H1 (cell line): ENCODE measurements at regions of chr16 and their contacts with region 1.

Region 1: DNA sequence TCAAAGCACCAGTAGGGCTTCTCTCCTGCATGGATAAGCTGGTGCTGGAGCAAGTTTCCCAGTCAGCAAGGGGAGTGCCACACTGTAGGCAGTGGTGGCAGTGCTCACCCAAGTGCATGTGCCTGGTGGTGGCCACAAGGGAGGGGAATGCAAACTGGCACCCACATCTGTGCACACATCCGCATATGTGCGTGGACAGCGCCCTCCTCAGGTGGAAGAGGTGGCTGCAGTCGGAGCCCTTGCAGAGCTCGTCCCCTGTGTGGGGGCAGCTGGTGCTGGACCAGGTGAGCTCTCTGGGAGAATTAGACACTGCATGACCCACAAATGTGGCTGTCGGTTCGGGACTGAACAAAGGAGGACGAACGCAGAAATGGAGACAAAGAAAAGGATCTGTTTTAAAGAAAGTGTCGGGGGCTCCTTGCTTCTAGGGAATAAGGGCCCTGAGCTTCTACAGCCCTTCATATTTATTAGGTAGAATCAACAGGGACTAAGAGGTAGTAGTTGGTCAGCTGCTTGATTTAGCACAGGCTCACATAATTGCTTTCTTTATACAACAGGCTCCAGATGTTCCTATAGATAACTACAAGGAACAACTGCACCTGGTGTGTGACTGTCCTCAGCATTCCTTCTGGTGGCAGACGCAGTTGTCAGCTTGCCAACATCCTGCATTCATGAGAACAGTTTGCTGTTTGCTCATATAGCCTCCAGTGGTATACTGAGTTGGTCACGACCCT is 5.3 kb upstream of the ZNF689 start:
- DNase-seq: peak; percentile 82 to 100
- H3K4me3 ChIP-seq: no peak overlapping the region
- H3K27ac ChIP-seq: no peak overlapping the region
- H3K4me1 ChIP-seq: peaks cover 0 to 3% (median under 1%) of the 10 kb centered on the region in 4 experiments; a peak in 1 of 7 replicates
- H3K27me3 ChIP-seq: no peaks in the 10 kb centered on the region; a peak in 2 of 7 replicates
- CTCF ChIP-seq: peak; percentile 99 to 100 (median 100)
- EP300 ChIP-seq: no peak
- POLR2A ChIP-seq: no peak
- RAD21 ChIP-seq: peak; percentile 99

Region 2: GRCh38 chr16:30482366-30482765 is 133.2 kb before region 1 on chr16:
- CTCF ChIA-PET with region 1: interaction called, 16 read pairs
- POLR2A ChIA-PET with region 1: no interaction called
- DNase-seq: no peak
- H3K4me3 ChIP-seq: no peak overlapping the region
- H3K27ac ChIP-seq: no peak overlapping the region
- H3K4me1 ChIP-seq: no peaks in the 10 kb centered on the region
- H3K27me3 ChIP-seq: no peaks in the 10 kb centered on the region
- CTCF ChIP-seq: peak in 1 of 3 experiments; percentile 42; a peak in 1 of 4 replicates
- EP300 ChIP-seq: no peak
- POLR2A ChIP-seq: no peak
- RAD21 ChIP-seq: no peak

Region 3: DNA sequence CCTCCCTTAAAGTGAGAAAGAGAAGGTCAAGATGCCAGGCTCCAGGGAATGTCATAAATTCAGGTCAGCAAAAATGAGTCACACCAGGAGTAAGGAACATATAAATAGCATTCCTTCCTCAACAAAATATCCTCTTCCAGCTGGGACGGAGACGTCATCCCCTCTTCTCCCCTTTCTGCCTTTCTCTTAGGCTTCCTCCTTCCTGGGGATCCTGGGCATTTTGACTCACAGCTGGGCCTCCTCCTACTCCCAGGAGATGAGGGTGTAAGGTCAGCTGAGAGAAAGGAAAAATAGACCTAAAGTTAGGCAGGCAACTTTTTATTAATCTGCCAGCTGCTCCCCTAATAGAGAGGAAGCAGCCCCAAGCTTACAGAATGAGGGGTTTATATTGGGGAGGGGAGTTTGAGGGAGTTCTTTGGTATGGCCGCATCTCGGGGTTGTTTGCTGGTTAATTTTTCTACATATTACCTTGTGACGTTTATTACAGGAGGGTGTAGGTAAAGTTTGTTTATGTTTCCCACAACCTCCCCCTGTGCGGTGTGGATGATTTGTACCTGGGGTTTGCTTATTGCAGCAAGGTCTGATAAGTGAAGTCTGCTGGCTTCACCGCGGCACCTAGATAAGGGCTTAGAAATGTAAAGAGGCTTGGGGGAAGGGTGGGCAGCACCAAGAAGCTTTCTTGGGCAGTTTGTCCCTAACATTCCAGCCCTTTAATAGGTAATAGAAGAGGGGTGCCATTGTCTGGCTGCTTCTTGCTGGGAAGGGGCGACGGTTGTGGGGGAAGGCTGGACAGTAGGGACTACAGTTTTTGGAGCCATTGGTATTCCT is 73.8 kb before region 1 on chr16:
- CTCF ChIA-PET with region 1: interaction called, 12 read pairs
- POLR2A ChIA-PET with region 1: interaction called, 32 read pairs
- DNase-seq: no peak
- H3K4me3 ChIP-seq: peak overlapping the region in 1 of 4 experiments; percentile 30; a peak in 2 of 8 replicates
- H3K27ac ChIP-seq: 0 out of 2 replicates have a peak overlapping the region, but pooled peaks have one; percentile 31
- H3K4me1 ChIP-seq: peaks cover 5 to 22% (median 19%) of the 10 kb centered on the region in 4 experiments
- H3K27me3 ChIP-seq: no peaks in the 10 kb centered on the region
- CTCF ChIP-seq: no peak
- EP300 ChIP-seq: no peak
- POLR2A ChIP-seq: no peak
- RAD21 ChIP-seq: no peak

Region 4: GRCh38 chr16:30585400-30586189 is 29.9 kb before region 1 on chr16 and contains the start of gene ZNF785:
- CTCF ChIA-PET with region 1: interaction called, 17 read pairs
- POLR2A ChIA-PET with region 1: interaction called, 32 read pairs
- DNase-seq: peak; percentile 91 to 93
- H3K4me3 ChIP-seq: peak within 1 kb of the TSS; percentile 78 to 89 (median 84)
- H3K27ac ChIP-seq: peak within 1 kb of the TSS; percentile 86
- H3K4me1 ChIP-seq: no peaks in the 10 kb centered on the region; a peak in 3 of 7 replicates
- H3K27me3 ChIP-seq: no peaks in the 10 kb centered on the region
- CTCF ChIP-seq: peak in 2 of 3 experiments; percentile 26 to 29; a peak in 3 of 4 replicates
- EP300 ChIP-seq: peak in 1 of 2 experiments; percentile 73; a peak in 1 of 3 replicates
- POLR2A ChIP-seq: peak; percentile 12 to 43; a peak in 2 of 3 replicates
- RAD21 ChIP-seq: peak; percentile 6 to 20; a peak in 3 of 4 replicates
- total RNA-seq, gene ZNF785: 12.9 and 14.8 TPM in 2 replicates

Region 5: DNA sequence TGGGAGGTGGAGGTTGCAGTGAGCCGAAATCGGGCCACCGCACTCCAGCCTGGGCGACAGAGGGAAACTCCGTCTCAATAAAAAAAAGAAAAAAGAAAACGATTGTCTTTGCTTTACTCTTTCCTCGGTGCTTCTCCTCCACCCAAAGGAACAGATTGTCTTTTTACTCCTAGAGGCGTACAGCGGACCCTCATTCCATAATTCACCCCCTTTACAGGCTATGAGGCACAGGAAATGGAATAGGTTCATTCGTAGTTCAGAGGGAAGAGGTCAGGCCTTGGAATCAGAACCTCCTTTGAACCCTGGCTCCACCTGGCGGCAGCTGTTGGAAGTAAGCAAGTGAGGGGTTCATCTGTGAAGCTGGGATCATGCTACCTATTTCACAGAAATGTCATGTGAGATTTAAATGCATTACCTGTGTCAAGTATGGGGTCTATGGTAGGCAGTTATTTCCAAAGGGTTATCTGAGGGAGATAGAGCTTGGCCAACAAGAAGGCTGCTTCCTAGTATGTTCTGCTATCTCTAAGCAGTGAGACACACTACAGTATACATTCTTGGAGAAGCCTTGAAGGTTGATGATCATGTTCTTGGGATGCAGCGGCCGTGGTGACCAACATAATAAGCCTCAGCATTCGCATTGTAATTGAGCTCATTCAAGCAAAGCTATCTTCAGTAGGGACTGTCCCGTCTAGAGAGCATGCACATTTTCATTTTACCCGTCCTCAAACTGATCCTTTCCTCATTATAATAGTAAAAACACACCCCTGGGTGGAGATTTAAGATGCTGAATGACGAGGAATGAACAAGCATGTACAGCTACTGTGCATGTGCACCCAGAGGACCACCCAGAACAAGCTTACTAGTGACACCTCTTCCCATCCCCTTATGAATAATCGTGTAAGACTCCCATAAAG is 13.4 kb after region 1 on chr16:
- CTCF ChIA-PET with region 1: interaction called, 74 read pairs
- POLR2A ChIA-PET with region 1: interaction called, 7 read pairs
- DNase-seq: peak in 1 of 2 experiments; percentile 98
- H3K4me3 ChIP-seq: no peak overlapping the region
- H3K27ac ChIP-seq: no peak overlapping the region
- H3K4me1 ChIP-seq: no peaks in the 10 kb centered on the region
- H3K27me3 ChIP-seq: no peaks in the 10 kb centered on the region
- CTCF ChIP-seq: peak; percentile 82 to 94 (median 84)
- EP300 ChIP-seq: no peak
- POLR2A ChIP-seq: no peak
- RAD21 ChIP-seq: peak; percentile 69 to 76

Region 6: GRCh38 chr16:30669896-30670797 is 54.6 kb after region 1 on chr16:
- CTCF ChIA-PET with region 1: no interaction called
- POLR2A ChIA-PET with region 1: no interaction called
- DNase-seq: no peak
- H3K4me3 ChIP-seq: no peak overlapping the region
- H3K27ac ChIP-seq: no peak overlapping the region
- H3K4me1 ChIP-seq: no peaks in the 10 kb centered on the region
- H3K27me3 ChIP-seq: peaks cover 51 to 96% (median 79%) of the 10 kb centered on the region in 4 experiments
- CTCF ChIP-seq: peak in 1 of 3 experiments; percentile 13; a peak in 1 of 4 replicates
- EP300 ChIP-seq: no peak
- POLR2A ChIP-seq: no peak
- RAD21 ChIP-seq: no peak

Region 7: GRCh38 chr16:30715737-30716445 is 100.4 kb after region 1 on chr16:
- CTCF ChIA-PET with region 1: no interaction called
- POLR2A ChIA-PET with region 1: no interaction called
- DNase-seq: no peak
- H3K4me3 ChIP-seq: no peak overlapping the region
- H3K27ac ChIP-seq: no peak overlapping the region
- H3K4me1 ChIP-seq: no peaks in the 10 kb centered on the region
- H3K27me3 ChIP-seq: no peaks in the 10 kb centered on the region
- CTCF ChIP-seq: no peak
- EP300 ChIP-seq: no peak
- POLR2A ChIP-seq: no peak
- RAD21 ChIP-seq: no peak

Region 8: GRCh38 chr16:30797670-30798309 is 182.3 kb after region 1 on chr16:
- CTCF ChIA-PET with region 1: no interaction called
- POLR2A ChIA-PET with region 1: no interaction called
- DNase-seq: no peak
- H3K4me3 ChIP-seq: no peak overlapping the region
- H3K27ac ChIP-seq: no peak overlapping the region
- H3K4me1 ChIP-seq: no peaks in the 10 kb centered on the region
- H3K27me3 ChIP-seq: peaks cover 0 to 4% (median under 1%) of the 10 kb centered on the region in 4 experiments; a peak in 5 of 7 replicates
- CTCF ChIP-seq: peak in 2 of 3 experiments; percentile 26 to 54; a peak in 2 of 4 replicates
- EP300 ChIP-seq: no peak
- POLR2A ChIP-seq: no peak
- RAD21 ChIP-seq: peak in 1 of 2 experiments; percentile 29; a peak in 1 of 4 replicates